GM12878 (cell line): ENCODE measurements at regions of chr11 and their contacts with region 1.

Region 1: GRCh38 chr11:73989156-73989555 is 6.5 kb upstream of the UCP2 start:
- DNase-seq: no peak
- ATAC-seq: no peak
- H3K4me3 ChIP-seq: no peak overlapping the region
- H3K27ac ChIP-seq: no peak overlapping the region
- H3K4me1 ChIP-seq: peaks cover 33% of the 10 kb centered on the region
- H3K27me3 ChIP-seq: no peaks in the 10 kb centered on the region
- CTCF ChIP-seq: peak in 1 of 3 experiments; percentile 16; a peak in 2 of 6 replicates
- EP300 ChIP-seq: no peak
- POLR2A ChIP-seq: no peak
- RAD21 ChIP-seq: peak; percentile 40

Region 2: DNA sequence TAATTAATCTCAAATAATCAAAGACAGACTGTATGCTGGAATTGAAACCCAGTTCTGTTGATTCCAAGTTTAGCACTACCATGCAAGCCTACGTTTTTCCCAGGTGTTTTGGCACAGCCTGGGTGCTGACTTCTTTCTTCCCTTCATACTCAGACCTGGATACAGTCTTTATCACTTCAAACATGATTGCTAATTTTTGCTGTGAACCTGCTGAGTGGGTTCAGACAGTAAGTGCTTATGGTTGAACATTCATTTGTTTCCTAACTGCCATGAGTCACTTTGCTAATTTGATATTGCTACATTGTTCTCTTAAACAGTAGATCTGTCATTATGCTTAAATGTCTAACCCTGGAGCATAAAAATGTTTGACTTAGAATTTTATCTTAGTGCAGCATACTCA is 100.1 kb before region 1 on chr11:
- CTCF ChIA-PET with region 1: no interaction called
- POLR2A ChIA-PET with region 1: no interaction called
- RAD21 ChIA-PET with region 1: no interaction called
- SMC1A ChIA-PET with region 1: no interaction called
- in situ Hi-C with region 1: no loop called
- intact Hi-C with region 1: no loop called
- DNase-seq: no peak
- ATAC-seq: no peak
- H3K4me3 ChIP-seq: no peak overlapping the region
- H3K27ac ChIP-seq: no peak overlapping the region
- H3K4me1 ChIP-seq: no peaks in the 10 kb centered on the region
- H3K27me3 ChIP-seq: no peaks in the 10 kb centered on the region
- CTCF ChIP-seq: no peak
- EP300 ChIP-seq: no peak
- POLR2A ChIP-seq: no peak
- RAD21 ChIP-seq: no peak

Region 3: GRCh38 chr11:73957654-73958361 is 31.3 kb before region 1 on chr11:
- CTCF ChIA-PET with region 1: no interaction called
- POLR2A ChIA-PET with region 1: no interaction called
- RAD21 ChIA-PET with region 1: no interaction called
- SMC1A ChIA-PET with region 1: no interaction called
- in situ Hi-C with region 1: no loop called
- intact Hi-C with region 1: no loop called
- DNase-seq: no peak
- ATAC-seq: peak; percentile 29; the same call in 2 of the 3 replicates
- H3K4me3 ChIP-seq: no peak overlapping the region
- H3K27ac ChIP-seq: no peak overlapping the region
- H3K4me1 ChIP-seq: peaks cover 3% of the 10 kb centered on the region; the same call in 1 of the 2 replicates
- H3K27me3 ChIP-seq: no peaks in the 10 kb centered on the region
- CTCF ChIP-seq: no peak
- EP300 ChIP-seq: no peak
- POLR2A ChIP-seq: no peak
- RAD21 ChIP-seq: no peak

Region 4: DNA sequence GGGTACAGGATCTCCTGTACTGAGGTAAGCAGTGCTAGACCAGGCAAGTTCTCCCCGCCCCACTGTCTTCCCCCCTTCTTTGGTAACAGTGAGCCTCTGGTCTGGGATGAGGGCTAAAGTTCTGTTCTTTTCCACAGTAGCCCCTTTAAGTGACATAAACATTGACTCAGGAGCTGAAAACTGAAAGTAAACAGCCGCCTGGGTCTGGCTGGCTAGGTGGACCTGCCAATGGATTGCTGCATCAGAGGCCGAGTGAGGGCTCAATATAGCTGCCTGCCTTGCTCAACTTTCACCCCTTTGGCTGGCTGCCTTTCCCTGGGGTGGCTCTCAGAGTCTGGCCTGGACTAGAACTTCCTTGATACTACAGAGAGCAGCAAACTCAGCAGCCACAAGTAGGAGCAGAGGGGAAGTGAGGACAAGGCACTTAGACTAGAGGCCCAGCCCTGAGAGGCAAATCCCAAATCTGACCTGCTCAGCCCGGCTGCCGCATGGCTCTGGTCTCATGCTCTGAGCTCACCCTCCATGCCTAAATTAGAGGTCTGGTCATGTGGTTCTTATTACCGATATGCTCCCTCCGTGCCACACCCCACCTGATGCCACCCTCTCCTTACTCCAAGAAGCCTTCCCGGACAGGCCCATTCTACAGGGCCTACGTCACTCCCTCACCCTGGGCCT is 29.3 kb after region 1 on chr11:
- CTCF ChIA-PET with region 1: interaction called, 8 read pairs
- POLR2A ChIA-PET with region 1: interaction called, 4 read pairs
- RAD21 ChIA-PET with region 1: interaction called, 7 read pairs
- SMC1A ChIA-PET with region 1: interaction called, 20 read pairs
- in situ Hi-C with region 1: no loop called
- intact Hi-C with region 1: loop called (anchors 5 kb)
- DNase-seq: no peak
- ATAC-seq: no peak
- H3K4me3 ChIP-seq: no peak overlapping the region
- H3K27ac ChIP-seq: no peak overlapping the region
- H3K4me1 ChIP-seq: peaks cover 21% of the 10 kb centered on the region
- H3K27me3 ChIP-seq: no peaks in the 10 kb centered on the region
- CTCF ChIP-seq: no peak
- EP300 ChIP-seq: no peak
- POLR2A ChIP-seq: no peak
- RAD21 ChIP-seq: no peak